Activated CD4-positive, alpha-beta memory T cell treated with anti-CD3 and anti-CD28 coated beads for 36 hours (primary cell): ENCODE measurements at regions of chr1 and their contacts with region 1.

Region 1: GRCh38 chr1:170461762-170462384 is 70.1 kb upstream of the GORAB start:
- DNase-seq: no peak
- H3K4me3 Mint-ChIP-seq: no peak overlapping the region
- H3K27ac Mint-ChIP-seq: no peak overlapping the region
- H3K4me1 Mint-ChIP-seq: no peaks in the 10 kb centered on the region
- H3K27me3 Mint-ChIP-seq: peaks cover 19% of the 10 kb centered on the region

Region 2: DNA sequence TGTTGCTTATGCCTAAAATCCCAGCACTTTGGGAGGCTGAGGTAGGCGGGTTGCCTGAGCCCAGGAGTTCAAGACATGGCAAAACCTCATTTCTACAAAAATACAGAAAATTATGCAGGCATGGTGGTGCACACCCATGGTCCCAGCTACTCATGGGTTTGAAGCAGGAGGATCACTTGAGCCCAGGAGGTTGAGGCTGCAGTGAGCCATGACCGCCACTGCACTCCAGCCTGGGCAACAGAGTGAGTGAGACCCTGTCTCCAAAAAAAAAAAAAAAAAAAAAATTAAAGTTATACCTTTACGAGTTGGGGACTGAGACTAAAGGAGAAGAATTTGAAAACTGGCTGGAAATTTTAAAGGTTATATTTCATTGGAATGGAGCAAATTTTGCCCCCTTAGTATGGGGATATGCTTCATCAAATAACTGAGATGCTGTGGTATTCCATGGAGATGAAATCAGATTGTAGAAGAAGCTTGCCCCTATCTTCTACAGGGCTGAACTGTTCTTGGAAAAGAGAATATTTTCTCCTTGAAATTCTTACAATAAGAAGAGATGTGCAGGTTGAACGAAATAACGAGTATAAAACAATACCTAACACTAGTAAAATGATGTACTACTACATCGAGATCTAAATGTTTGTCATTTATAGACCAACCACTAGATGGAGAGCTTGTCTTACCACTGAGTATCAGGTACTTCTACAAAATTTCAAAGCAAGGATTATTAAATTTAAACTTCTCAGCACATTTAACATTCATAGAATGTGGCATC is 533.2 kb before region 1 on chr1:
- CTCF ChIA-PET with region 1: no interaction called
- POLR2A ChIA-PET with region 1: no interaction called
- intact Hi-C with region 1: loop called (anchors 5 kb)
- DNase-seq: no peak
- H3K4me3 Mint-ChIP-seq: no peak overlapping the region
- H3K27ac Mint-ChIP-seq: no peak overlapping the region
- H3K4me1 Mint-ChIP-seq: peaks cover 7% of the 10 kb centered on the region
- H3K27me3 Mint-ChIP-seq: no peaks in the 10 kb centered on the region

Region 3: GRCh38 chr1:170448661-170449158 is 13.2 kb before region 1 on chr1:
- CTCF ChIA-PET with region 1: no interaction called
- POLR2A ChIA-PET with region 1: no interaction called
- intact Hi-C with region 1: no loop called
- DNase-seq: no peak
- H3K4me3 Mint-ChIP-seq: no peak overlapping the region
- H3K27ac Mint-ChIP-seq: no peak overlapping the region
- H3K4me1 Mint-ChIP-seq: no peaks in the 10 kb centered on the region
- H3K27me3 Mint-ChIP-seq: no peaks in the 10 kb centered on the region

Region 4: GRCh38 chr1:170481000-170481399 is 19.1 kb after region 1 on chr1:
- CTCF ChIA-PET with region 1: no interaction called
- POLR2A ChIA-PET with region 1: no interaction called
- intact Hi-C with region 1: no loop called
- DNase-seq: no peak
- H3K4me3 Mint-ChIP-seq: no peak overlapping the region
- H3K27ac Mint-ChIP-seq: no peak overlapping the region
- H3K4me1 Mint-ChIP-seq: no peaks in the 10 kb centered on the region
- H3K27me3 Mint-ChIP-seq: peaks cover 2% of the 10 kb centered on the region

Region 5: GRCh38 chr1:170586321-170587252 is 124.7 kb after region 1 on chr1:
- CTCF ChIA-PET with region 1: no interaction called
- POLR2A ChIA-PET with region 1: no interaction called
- intact Hi-C with region 1: no loop called
- DNase-seq: no peak
- H3K4me3 Mint-ChIP-seq: no peak overlapping the region
- H3K27ac Mint-ChIP-seq: no peak overlapping the region
- H3K4me1 Mint-ChIP-seq: peaks cover 3% of the 10 kb centered on the region
- H3K27me3 Mint-ChIP-seq: peaks cover 25% of the 10 kb centered on the region